Sigmoid colon (tissue), 7 donors: ENCODE measurements at regions of chr2 and their contacts with region 1.

Region 1: GRCh38 chr2:28751252-28751955 is at the start of gene PPP1CB:
- DNase-seq: peak; percentile 98
- H3K4me3 ChIP-seq: peak within 1 kb of the TSS; percentile 91 to 99 (median 92)
- H3K27ac ChIP-seq: peak within 1 kb of the TSS; percentile 99 to 100 (median 100)
- H3K4me1 ChIP-seq: peaks cover 0 to 43% (median 36%) of the 10 kb centered on the region in 4 donors
- H3K27me3 ChIP-seq: no peaks in the 10 kb centered on the region
- CTCF ChIP-seq: no peak
- EP300 ChIP-seq: peak in 1 of 4 donors; percentile 53
- POLR2A ChIP-seq: peak; percentile 90 to 92
- total RNA-seq, gene PPP1CB: 446 to 567 (median 515) TPM

Region 2: GRCh38 chr2:28566521-28567041 is 184.8 kb before region 1 on chr2:
- intact Hi-C with region 1: loop called (anchors 2 kb)
- DNase-seq: peak; percentile 91
- H3K4me3 ChIP-seq: peak overlapping the region; percentile 33 to 63 (median 60)
- H3K27ac ChIP-seq: peak overlapping the region; percentile 68 to 84 (median 71)
- H3K4me1 ChIP-seq: peaks cover 0 to 8% (median 0%) of the 10 kb centered on the region in 4 donors
- H3K27me3 ChIP-seq: no peaks in the 10 kb centered on the region
- CTCF ChIP-seq: peak; percentile 99 to 100 (median 99)
- EP300 ChIP-seq: peak in 1 of 4 donors; percentile 23
- POLR2A ChIP-seq: no peak

Region 3: GRCh38 chr2:28594289-28595108 is 156.9 kb before region 1 on chr2:
- intact Hi-C with region 1: loop called (anchors 1 kb)
- DNase-seq: peak; percentile 96
- H3K4me3 ChIP-seq: peak overlapping the region in 1 of 4 donors; percentile 14
- H3K27ac ChIP-seq: peak overlapping the region; percentile 81 to 93 (median 85)
- H3K4me1 ChIP-seq: peaks cover 0 to 29% (median 25%) of the 10 kb centered on the region in 4 donors
- H3K27me3 ChIP-seq: no peaks in the 10 kb centered on the region
- CTCF ChIP-seq: peak; percentile 83 to 94 (median 87)
- EP300 ChIP-seq: no peak
- POLR2A ChIP-seq: no peak

Region 4: DNA sequence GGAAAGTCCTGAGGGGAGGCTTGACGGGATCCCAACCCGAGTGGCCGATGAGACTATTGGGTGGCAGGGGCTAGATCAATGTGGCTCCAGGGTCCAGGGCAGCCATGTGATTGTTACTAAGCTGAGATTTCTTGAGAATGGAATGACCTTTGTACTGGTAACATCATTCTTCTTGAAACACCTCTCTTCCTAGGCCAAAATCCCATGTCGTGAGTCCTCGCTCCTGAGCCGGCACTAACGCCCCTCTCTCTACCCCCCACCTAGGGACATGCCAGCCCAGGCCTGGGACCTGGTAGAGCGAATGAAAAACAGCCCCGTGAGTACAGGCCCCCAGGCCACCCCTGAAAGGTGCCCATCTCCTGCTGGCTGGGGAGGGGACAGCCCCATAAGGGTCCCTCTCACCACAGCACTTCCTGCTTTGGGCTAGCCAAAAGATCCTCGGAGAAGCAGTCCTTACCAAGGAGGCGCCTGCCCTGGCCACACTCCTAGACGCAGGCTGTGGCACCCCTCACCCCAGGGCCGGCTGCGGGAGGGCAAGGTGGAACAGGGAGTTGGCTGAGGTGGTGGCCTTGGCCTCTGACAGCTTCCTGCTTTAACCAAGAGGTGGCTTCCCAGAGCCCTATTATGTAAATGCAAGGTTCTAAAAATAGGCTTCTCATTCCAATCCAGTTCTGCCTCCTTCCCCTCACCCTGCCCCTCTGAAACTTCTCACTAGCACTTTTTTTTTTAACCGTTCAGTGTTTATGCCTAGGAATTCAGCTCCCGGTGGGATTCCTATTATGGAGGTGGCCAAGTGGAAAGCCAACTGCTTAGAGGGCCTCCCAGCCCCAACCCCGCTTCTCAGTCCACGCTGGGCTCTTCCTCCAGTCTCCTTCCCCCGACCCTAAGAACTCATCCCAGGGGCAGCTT is 126.4 kb before region 1 on chr2:
- intact Hi-C with region 1: no loop called
- DNase-seq: peak; percentile 87
- H3K4me3 ChIP-seq: peak overlapping the region in 2 of 4 donors; percentile 6 to 23
- H3K27ac ChIP-seq: peak overlapping the region; percentile 90 to 94 (median 92)
- H3K4me1 ChIP-seq: peaks cover 0 to 87% (median 76%) of the 10 kb centered on the region in 4 donors
- H3K27me3 ChIP-seq: no peaks in the 10 kb centered on the region
- CTCF ChIP-seq: peak in 1 of 4 experiments; percentile 14
- EP300 ChIP-seq: peak in 2 of 4 donors; percentile 24 to 43
- POLR2A ChIP-seq: no peak

Region 5: DNA sequence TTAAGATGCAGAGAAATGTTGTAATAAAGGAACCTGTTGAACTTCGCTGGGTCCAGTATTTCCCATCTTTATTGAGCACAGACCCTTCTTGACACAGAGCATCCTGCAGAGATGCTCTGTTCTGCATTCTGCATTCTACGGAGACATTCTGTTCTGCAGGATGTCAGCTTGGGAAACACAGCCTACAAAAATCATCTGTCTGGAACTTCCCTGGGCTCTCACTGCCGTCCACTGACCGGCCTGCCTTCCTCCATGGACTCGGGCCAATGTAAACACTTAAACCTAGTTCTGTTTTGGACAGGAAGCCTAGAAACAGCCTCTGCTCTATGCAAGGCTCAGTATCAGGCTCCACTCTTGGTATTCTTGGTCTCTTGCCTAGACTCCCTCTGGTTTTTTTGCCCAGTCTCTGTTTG is 89.8 kb before region 1 on chr2:
- intact Hi-C with region 1: loop called (anchors 1 kb)
- DNase-seq: peak; percentile 95
- H3K4me3 ChIP-seq: no peak overlapping the region
- H3K27ac ChIP-seq: peak overlapping the region; percentile 83 to 94 (median 90)
- H3K4me1 ChIP-seq: peaks cover 0 to 72% (median 63%) of the 10 kb centered on the region in 4 donors
- H3K27me3 ChIP-seq: no peaks in the 10 kb centered on the region
- CTCF ChIP-seq: no peak
- EP300 ChIP-seq: peak; percentile 72 to 95 (median 81)
- POLR2A ChIP-seq: no peak

Region 6: DNA sequence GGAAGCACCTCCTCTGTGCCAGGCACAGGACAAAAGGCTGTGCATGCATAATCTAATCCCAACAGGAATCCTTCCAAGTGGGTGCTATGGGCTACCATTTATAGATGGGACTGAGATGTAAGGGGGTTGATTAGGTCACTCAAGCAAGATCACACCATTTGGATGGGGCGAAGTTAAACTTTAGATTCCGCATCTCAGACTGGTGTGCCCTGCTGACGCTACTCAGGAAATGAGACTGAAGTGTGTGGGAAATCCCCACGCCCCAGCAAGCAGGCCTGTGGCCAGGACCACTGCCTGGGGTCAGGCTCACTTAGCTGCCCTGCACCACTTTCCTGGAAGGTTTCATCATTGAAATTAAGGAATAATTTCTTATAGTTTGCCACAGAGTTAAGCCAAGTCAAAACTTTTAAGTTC is 70.2 kb before region 1 on chr2:
- intact Hi-C with region 1: loop called (anchors 5 kb)
- DNase-seq: no peak
- H3K4me3 ChIP-seq: no peak overlapping the region
- H3K27ac ChIP-seq: peak overlapping the region in 2 of 4 donors; percentile 76 to 82
- H3K4me1 ChIP-seq: peaks cover 0 to 39% (median 30%) of the 10 kb centered on the region in 4 donors
- H3K27me3 ChIP-seq: no peaks in the 10 kb centered on the region
- CTCF ChIP-seq: no peak
- EP300 ChIP-seq: no peak
- POLR2A ChIP-seq: no peak

Region 7: DNA sequence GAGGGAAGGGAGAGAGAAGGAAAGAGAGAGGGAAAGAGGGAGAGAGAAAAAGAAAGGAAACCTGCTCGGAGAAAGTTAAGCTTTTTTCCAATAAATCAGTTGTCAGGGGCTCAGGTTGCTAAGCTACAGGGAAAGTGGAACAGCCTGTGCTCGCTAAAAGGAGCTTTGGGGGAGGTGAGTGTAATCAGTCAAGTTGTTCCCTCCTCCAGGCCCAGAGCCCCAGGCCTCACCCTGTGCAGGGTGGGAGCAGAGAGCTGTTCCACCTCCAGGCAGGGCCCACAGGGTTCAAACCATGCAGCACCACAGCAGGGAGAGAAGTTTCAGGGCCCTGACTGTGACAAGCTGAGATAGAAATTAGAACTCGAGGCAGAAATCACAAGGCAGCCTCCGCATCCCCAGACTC is 56.2 kb before region 1 on chr2:
- intact Hi-C with region 1: no loop called
- DNase-seq: no peak
- H3K4me3 ChIP-seq: no peak overlapping the region
- H3K27ac ChIP-seq: peak overlapping the region in 3 of 4 donors; percentile 50 to 58 (median 54)
- H3K4me1 ChIP-seq: peaks cover 0 to 24% (median 21%) of the 10 kb centered on the region in 4 donors
- H3K27me3 ChIP-seq: no peaks in the 10 kb centered on the region
- CTCF ChIP-seq: no peak
- EP300 ChIP-seq: peak in 2 of 4 donors; percentile 32 to 39
- POLR2A ChIP-seq: no peak

Region 8: DNA sequence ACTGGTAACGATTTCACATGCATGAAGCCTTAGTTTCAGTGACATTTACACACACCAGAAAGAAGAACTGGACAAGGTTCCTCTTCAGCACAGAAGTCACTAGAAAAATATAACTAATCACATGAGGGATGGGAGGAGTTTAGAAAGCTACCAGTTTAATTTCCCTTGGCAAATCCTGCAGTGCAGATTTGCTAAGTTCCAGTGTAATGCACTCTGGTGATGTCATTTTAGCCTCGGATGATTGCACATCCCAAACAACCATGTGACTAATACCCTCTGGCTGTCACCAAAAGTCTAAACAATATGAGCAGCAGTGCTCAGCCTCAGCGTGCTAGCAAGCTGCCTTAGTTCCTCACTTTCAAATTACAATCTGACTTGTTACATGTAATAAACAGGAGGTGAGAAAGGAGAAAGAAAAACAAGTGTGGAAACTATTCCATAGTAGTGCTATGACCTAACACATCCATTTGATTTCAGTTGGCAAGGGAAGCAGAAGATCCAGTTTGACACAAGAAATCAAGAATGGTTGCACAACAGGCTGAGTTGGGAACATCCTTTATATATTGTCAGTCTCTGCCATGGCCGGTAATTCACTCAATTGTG is 35.0 kb before region 1 on chr2:
- intact Hi-C with region 1: loop called (anchors 1 kb)
- DNase-seq: peak; percentile 87
- H3K4me3 ChIP-seq: no peak overlapping the region
- H3K27ac ChIP-seq: peak overlapping the region; percentile 72 to 80 (median 74)
- H3K4me1 ChIP-seq: peaks cover 0 to 22% (median 19%) of the 10 kb centered on the region in 4 donors
- H3K27me3 ChIP-seq: no peaks in the 10 kb centered on the region
- CTCF ChIP-seq: no peak
- EP300 ChIP-seq: peak in 1 of 4 donors; percentile 38
- POLR2A ChIP-seq: no peak

Region 9: DNA sequence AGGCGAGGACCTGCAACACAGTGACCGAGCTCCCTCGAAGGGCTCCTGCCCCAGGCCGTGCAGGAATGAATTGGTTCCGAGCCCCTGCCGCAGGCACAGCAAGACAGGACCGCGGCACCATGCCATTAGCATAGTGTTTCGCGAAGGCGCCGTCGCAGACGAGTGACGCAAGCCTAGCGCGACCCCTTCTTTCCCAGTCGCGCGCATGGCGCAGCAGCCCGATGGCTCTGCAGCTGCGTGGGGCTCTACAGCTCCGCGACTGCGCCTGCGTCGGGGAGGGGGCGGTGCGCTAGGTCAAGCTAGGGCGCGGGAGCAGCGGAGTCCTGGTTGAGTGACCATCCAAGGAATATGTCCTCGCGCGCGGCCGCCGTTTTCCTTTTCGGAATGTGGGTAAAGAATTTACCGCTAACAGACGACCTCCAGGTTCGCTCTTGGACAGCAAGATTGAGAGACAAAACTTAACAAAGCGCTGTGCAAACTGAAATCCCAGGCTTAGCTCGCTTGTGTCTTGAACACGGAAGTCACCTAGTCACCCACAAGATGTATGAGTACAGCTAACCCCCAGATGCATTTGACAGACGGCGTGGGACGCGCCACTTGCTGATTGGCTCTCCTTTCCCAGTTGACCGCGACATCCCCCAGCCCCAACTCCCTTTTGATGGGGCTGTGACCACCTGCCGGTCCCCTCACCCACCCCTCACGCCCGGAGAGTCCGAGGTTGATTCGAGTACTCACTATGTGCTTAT is 118.9 kb after region 1 on chr2 and contains the start of gene TRMT61B:
- intact Hi-C with region 1: loop called (anchors 5 kb)
- DNase-seq: peak; percentile 97
- H3K4me3 ChIP-seq: peak within 1 kb of the TSS; percentile 75 to 93 (median 89)
- H3K27ac ChIP-seq: peak within 1 kb of the TSS; percentile 81 to 88 (median 84)
- H3K4me1 ChIP-seq: peaks cover 0 to 41% (median 29%) of the 10 kb centered on the region in 4 donors
- H3K27me3 ChIP-seq: no peaks in the 10 kb centered on the region
- CTCF ChIP-seq: no peak
- EP300 ChIP-seq: peak in 2 of 4 donors; percentile 12 to 64
- POLR2A ChIP-seq: peak; percentile 9 to 58
- total RNA-seq, gene TRMT61B: 8.6 to 16.8 (median 10.5) TPM